ENCODE measurements at regions of chr16 and their contacts with region 1.

Region 1: GRCh38 chr16:84952335-84953189 is 58.8 kb downstream of the ZDHHC7 start:
- DNase-seq: peak in 1 of 2 donors; percentile 88
- H3K4me3 ChIP-seq: no peak overlapping the region
- H3K27ac ChIP-seq: no peak overlapping the region
- H3K4me1 ChIP-seq: peaks cover 0 to 6% of the 10 kb centered on the region in 2 donors
- H3K27me3 ChIP-seq: no peaks in the 10 kb centered on the region
- CTCF ChIP-seq: peak; percentile 83 to 87 (median 86)

Region 2: GRCh38 chr16:84754353-84754856 is 198.2 kb before region 1 on chr16:
- intact Hi-C with region 1: loop called (anchors 1 kb)
- DNase-seq: peak in 1 of 2 donors; percentile 87
- H3K4me3 ChIP-seq: no peak overlapping the region
- H3K27ac ChIP-seq: no peak overlapping the region
- H3K4me1 ChIP-seq: peaks cover 0 to 4% of the 10 kb centered on the region in 2 donors
- H3K27me3 ChIP-seq: no peaks in the 10 kb centered on the region
- CTCF ChIP-seq: peak; percentile 62 to 88 (median 84)

Region 3: DNA sequence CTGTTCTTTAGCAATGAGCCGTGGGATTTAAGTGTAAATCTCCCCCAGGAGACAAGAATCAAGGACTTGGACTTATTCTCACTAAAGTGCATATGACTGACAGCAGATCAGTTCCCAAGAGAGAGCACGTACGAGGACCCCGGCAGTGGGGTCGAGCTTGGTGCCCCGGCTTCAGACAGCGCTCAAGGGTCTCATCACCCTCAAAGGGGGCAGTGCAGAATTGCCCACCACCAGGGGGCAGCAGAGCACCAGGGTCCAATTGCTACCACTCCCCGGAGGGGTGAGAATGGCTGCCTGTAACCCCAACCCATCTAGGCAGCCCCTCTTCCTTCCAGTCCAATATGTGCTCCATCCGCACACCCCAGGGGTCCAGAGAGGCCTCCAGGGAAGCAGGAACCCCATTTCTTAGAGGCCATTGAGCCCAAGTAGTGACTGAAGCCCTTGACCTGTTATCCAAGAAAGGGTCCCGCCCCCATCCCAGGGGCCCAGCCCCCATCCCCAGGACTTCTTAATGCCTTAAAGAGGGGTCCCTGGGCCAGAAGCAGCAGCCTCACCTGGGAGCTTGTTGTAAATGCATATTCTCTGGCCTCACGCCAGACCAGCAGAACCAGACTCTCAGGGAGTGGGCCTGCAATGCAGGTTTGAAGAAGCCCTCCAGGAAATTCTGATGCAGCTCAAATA is 27.3 kb before region 1 on chr16:
- intact Hi-C with region 1: loop called (anchors 2 kb)
- DNase-seq: no peak
- H3K4me3 ChIP-seq: no peak overlapping the region
- H3K27ac ChIP-seq: no peak overlapping the region
- H3K4me1 ChIP-seq: peaks cover 11 to 14% of the 10 kb centered on the region in 2 donors
- H3K27me3 ChIP-seq: no peaks in the 10 kb centered on the region
- CTCF ChIP-seq: peak; percentile 71 to 78 (median 76)